B cell (primary cell): ENCODE measurements at regions of chr19 and their contacts with region 1.

Region 1: DNA sequence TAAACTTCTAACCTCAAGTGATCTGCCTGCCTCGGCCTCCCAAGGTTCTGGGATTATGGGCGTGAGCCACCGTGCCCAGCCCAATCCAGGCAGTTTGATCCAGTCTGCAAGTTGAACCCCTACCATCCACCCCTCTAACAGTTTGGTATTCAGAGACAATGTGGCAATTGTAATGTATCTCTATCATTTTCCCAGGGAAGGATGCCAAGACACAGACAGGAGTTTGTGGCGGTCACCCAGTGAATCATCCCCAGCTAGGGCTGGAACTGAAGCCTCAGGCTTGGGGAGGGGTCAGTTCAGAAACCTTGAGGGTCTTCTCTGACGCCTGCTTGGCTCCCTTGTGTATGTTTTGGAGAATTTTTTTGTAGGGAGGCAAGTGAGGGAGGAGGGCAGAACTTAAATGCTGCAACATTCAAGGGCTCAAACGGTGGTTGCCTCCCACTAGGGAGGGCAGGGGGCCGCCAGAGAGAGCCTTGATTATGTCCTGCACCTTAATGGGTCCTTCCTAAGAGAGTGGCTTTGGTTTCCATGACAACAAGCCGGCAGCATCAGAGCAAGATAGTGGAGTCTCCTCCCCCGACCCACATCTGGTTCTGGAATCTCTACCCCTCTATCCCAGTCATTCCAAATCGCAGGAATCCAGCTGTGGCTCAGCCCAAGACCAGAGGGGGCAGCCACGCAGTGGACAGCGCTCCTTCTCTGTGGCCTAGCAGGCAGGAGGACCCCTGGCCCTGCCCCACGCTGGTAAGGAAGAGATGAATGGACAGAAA is 14.9 kb upstream of the FEM1A start:
- DNase-seq: no peak
- ATAC-seq: no peak
- H3K4me3 ChIP-seq: no peak overlapping the region
- H3K4me3 Mint-ChIP-seq: no peak overlapping the region
- H3K27ac ChIP-seq: no peak overlapping the region
- H3K27ac Mint-ChIP-seq: no peak overlapping the region
- H3K4me1 ChIP-seq: peaks cover 0 to 3% of the 10 kb centered on the region in 2 donors
- H3K4me1 Mint-ChIP-seq: peaks cover 2% of the 10 kb centered on the region
- H3K27me3 ChIP-seq: peaks cover 0 to 23% (median 2%) of the 10 kb centered on the region in 4 experiments
- H3K27me3 Mint-ChIP-seq: peaks cover 26% of the 10 kb centered on the region
- CTCF ChIP-seq: no peak

Region 2: GRCh38 chr19:5695288-5696195 is 918.9 kb after region 1 on chr19:
- CTCF ChIA-PET with region 1: no interaction called
- POLR2A ChIA-PET with region 1: interaction called, 10 read pairs
- intact Hi-C with region 1: no loop called
- DNase-seq: no peak
- ATAC-seq: no peak
- H3K4me3 ChIP-seq: no peak overlapping the region
- H3K4me3 Mint-ChIP-seq: no peak overlapping the region
- H3K27ac ChIP-seq: no peak overlapping the region
- H3K27ac Mint-ChIP-seq: peak overlapping the region; percentile 20
- H3K4me1 ChIP-seq: peaks cover 3 to 17% of the 10 kb centered on the region in 2 donors
- H3K4me1 Mint-ChIP-seq: peaks cover 24% of the 10 kb centered on the region
- H3K27me3 ChIP-seq: no peaks in the 10 kb centered on the region
- H3K27me3 Mint-ChIP-seq: no peaks in the 10 kb centered on the region
- CTCF ChIP-seq: no peak